Dorsolateral prefrontal cortex (tissue), 120 donors: ENCODE measurements at regions of chr19 and their contacts with region 1.

Region 1: GRCh38 chr19:11964858-11965645 is at the start of gene ZNF763:
- DNase-seq: peak; percentile 93 to 98 (median 96)
- H3K4me3 ChIP-seq: peak within 1 kb of the TSS; percentile 54 to 96 (median 81)
- H3K27ac ChIP-seq: peak within 1 kb of the TSS; percentile 75 to 99 (median 96)
- H3K27me3 ChIP-seq: no peaks in the 10 kb centered on the region
- CTCF ChIP-seq: peak in 16 of 56 donors; percentile 0 to 65 (median 22)
- total RNA-seq, gene ZNF763: 1.5 to 12.0 (median 6.0) TPM

Region 2: GRCh38 chr19:11924886-11925650 is 40.0 kb before region 1 on chr19 and contains the start of gene ZNF700:
- intact Hi-C with region 1: loop called in 1 of 2 experiments (anchors 2 kb)
- DNase-seq: peak; percentile 90 to 97 (median 96)
- H3K4me3 ChIP-seq: peak within 1 kb of the TSS; percentile 59 to 100 (median 94)
- H3K27ac ChIP-seq: peak within 1 kb of the TSS; percentile 65 to 97 (median 88)
- H3K27me3 ChIP-seq: no peaks in the 10 kb centered on the region
- CTCF ChIP-seq: peak in 17 of 56 donors; percentile 7 to 55 (median 24)
- total RNA-seq, gene ZNF700: 8.4 to 16.2 (median 11.6) TPM

Region 3: GRCh38 chr19:11987405-11988281 is 22.6 kb after region 1 on chr19:
- intact Hi-C with region 1: loop called (anchors 1 kb)
- DNase-seq: peak; percentile 85 to 96 (median 95)
- H3K4me3 ChIP-seq: peak overlapping the region; percentile 52 to 90 (median 78)
- H3K27ac ChIP-seq: peak overlapping the region in 50 of 59 donors; percentile 3 to 87 (median 62)
- H3K27me3 ChIP-seq: no peaks in the 10 kb centered on the region
- CTCF ChIP-seq: peak in 43 of 56 donors; percentile 3 to 66 (median 39)

Region 4: GRCh38 chr19:12064590-12065538 is 99.8 kb after region 1 on chr19 and contains the start of gene ZNF844:
- intact Hi-C with region 1: loop called in 1 of 2 experiments (anchors 5 kb)
- DNase-seq: peak; percentile 97 to 99 (median 98)
- H3K4me3 ChIP-seq: peak within 1 kb of the TSS; percentile 56 to 95 (median 80)
- H3K27ac ChIP-seq: peak within 1 kb of the TSS; percentile 58 to 97 (median 90)
- H3K27me3 ChIP-seq: no peaks in the 10 kb centered on the region
- CTCF ChIP-seq: peak in 16 of 56 donors; percentile 6 to 42 (median 26)
- total RNA-seq, gene ZNF844: 7.1 to 44.3 (median 13.7) TPM